Naive thymus-derived CD4-positive, alpha-beta T cell (primary cell): ENCODE measurements at regions of chr20 and their contacts with region 1.

Region 1: DNA sequence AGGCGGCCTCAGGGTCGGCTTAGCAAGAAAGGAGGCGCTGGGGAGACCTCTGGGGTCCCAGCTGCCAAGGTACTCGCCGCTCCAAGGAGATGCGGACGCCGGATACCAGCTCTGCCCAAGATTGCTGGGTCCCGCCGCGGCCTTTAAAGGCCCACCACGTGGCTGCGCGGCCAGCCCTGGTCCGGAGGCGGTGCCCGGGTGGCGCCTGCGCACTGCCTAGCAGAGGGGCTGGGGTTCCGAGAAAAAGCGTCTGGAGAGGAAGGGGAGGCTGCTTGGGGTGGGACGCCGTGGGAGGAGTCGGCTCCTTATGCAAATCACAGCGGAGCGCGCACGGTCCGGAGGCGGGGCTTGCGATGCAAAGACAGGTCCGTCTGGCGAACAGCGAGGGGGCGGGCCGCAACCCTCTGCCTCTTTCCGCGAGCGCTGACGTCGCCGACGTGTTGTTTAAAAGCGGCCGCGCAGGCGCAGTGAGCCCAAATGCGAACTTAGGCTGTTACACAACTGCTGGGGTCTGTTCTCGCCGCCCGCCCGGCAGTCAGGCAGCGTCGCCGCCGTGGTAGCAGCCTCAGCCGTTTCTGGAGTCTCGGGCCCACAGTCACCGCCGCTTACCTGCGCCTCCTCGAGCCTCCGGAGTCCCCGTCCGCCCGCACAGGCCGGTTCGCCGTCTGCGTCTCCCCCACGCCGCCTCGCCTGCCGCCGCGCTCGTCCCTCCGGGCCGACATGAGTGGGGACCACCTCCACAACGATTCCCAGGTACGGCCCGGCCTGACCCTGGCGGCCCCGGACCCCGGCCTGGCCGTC is at the start of gene TOP1:
- DNase-seq: peak; percentile 98 to 100 (median 99)
- ATAC-seq: peak; percentile 99
- H3K4me3 ChIP-seq: peak within 1 kb of the TSS; percentile 58
- H3K4me3 Mint-ChIP-seq: peak within 1 kb of the TSS; percentile 79 to 96 (median 94)
- H3K27ac ChIP-seq: peak within 1 kb of the TSS; percentile 99
- H3K27ac Mint-ChIP-seq: peak within 1 kb of the TSS; percentile 88 to 97 (median 96)
- H3K4me1 ChIP-seq: peaks cover 32 to 38% of the 10 kb centered on the region in 2 donors
- H3K4me1 Mint-ChIP-seq: peaks cover 41 to 52% (median 48%) of the 10 kb centered on the region in 7 donors
- H3K27me3 ChIP-seq: no peaks in the 10 kb centered on the region
- H3K27me3 Mint-ChIP-seq: no peaks in the 10 kb centered on the region
- total RNA-seq, gene TOP1: 32.0 to 82.8 (median 43.4) TPM

Region 2: GRCh38 chr20:40970201-40970600 is 58.3 kb before region 1 on chr20:
- CTCF ChIA-PET with region 1: no interaction called
- POLR2A ChIA-PET with region 1: no interaction called
- intact Hi-C with region 1: loop called in 1 of 2 experiments (anchors 1 kb)
- DNase-seq: no peak
- ATAC-seq: no peak
- H3K4me3 ChIP-seq: no peak overlapping the region
- H3K4me3 Mint-ChIP-seq: no peak overlapping the region
- H3K27ac ChIP-seq: no peak overlapping the region
- H3K27ac Mint-ChIP-seq: no peak overlapping the region
- H3K4me1 ChIP-seq: no peaks in the 10 kb centered on the region
- H3K4me1 Mint-ChIP-seq: peaks cover 5 to 12% (median 9%) of the 10 kb centered on the region in 7 donors
- H3K27me3 ChIP-seq: no peaks in the 10 kb centered on the region
- H3K27me3 Mint-ChIP-seq: peaks cover 0 to 49% (median 8%) of the 10 kb centered on the region in 5 donors

Region 3: DNA sequence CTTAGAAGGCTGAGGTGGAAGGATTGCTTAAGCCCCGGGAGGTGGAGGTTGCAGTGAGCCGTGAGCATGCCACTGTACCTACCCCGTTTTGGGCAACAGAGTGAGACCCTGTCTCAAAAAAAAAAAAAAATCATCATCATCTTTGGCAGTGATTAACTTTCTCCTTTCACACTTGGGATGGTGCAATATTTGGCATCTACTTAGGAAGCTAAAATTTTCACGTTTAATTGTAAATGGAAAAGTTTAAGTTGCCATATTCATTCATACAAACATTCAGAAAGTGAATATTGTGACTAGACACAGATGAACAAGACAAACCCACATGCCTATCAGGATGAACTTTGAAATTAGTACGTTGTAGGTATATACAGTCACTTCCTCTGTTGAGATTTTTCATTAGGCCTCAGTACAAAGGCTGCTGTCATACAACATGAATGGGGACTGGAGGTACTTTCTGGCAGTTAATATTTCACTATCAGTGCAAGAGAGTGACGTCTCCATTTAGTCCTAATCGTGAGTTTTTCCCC is 10.4 kb after region 1 on chr20:
- CTCF ChIA-PET with region 1: interaction called, 3 read pairs
- POLR2A ChIA-PET with region 1: interaction called, 6 read pairs
- intact Hi-C with region 1: loop called (anchors 1 kb)
- DNase-seq: no peak
- ATAC-seq: peak; percentile 34
- H3K4me3 ChIP-seq: no peak overlapping the region
- H3K4me3 Mint-ChIP-seq: peak overlapping the region in 6 of 10 donors; percentile 11 to 42 (median 28)
- H3K27ac ChIP-seq: no peak overlapping the region
- H3K27ac Mint-ChIP-seq: peak overlapping the region in 5 of 9 donors; percentile 45 to 63 (median 48)
- H3K4me1 ChIP-seq: peaks cover 35 to 42% of the 10 kb centered on the region in 2 donors
- H3K4me1 Mint-ChIP-seq: peaks cover 61 to 99% (median 93%) of the 10 kb centered on the region in 7 donors
- H3K27me3 ChIP-seq: no peaks in the 10 kb centered on the region
- H3K27me3 Mint-ChIP-seq: no peaks in the 10 kb centered on the region

Region 4: DNA sequence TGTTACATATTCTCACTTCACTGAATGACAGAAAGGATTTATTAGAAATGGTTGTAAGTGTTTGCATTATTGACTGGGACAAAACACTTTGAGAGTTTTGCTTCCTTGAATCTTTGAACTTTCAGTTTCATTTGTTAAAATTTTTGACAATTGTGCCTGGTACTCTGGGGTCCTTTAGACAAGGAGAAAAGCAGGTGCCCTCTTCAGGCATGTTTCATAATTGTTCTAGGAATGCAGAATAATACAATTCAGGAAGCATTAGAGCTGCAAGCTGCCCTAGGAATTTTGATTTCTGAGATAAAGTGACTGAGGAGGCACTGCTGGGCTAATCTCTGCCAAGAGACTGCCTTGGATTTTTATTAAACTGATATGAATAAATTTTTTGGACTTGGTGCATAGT is 49.8 kb after region 1 on chr20:
- CTCF ChIA-PET with region 1: no interaction called
- POLR2A ChIA-PET with region 1: interaction called, 3 read pairs
- intact Hi-C with region 1: loop called (anchors 2 kb)
- DNase-seq: peak in 1 of 9 donors; percentile 16
- ATAC-seq: peak; percentile 45
- H3K4me3 ChIP-seq: no peak overlapping the region
- H3K4me3 Mint-ChIP-seq: peak overlapping the region in 6 of 10 donors; percentile 24 to 56 (median 49)
- H3K27ac ChIP-seq: no peak overlapping the region
- H3K27ac Mint-ChIP-seq: peak overlapping the region; percentile 24 to 76 (median 63)
- H3K4me1 ChIP-seq: peaks cover 4 to 40% of the 10 kb centered on the region in 2 donors
- H3K4me1 Mint-ChIP-seq: peaks cover 37 to 71% (median 66%) of the 10 kb centered on the region in 7 donors
- H3K27me3 ChIP-seq: no peaks in the 10 kb centered on the region
- H3K27me3 Mint-ChIP-seq: no peaks in the 10 kb centered on the region

Region 5: DNA sequence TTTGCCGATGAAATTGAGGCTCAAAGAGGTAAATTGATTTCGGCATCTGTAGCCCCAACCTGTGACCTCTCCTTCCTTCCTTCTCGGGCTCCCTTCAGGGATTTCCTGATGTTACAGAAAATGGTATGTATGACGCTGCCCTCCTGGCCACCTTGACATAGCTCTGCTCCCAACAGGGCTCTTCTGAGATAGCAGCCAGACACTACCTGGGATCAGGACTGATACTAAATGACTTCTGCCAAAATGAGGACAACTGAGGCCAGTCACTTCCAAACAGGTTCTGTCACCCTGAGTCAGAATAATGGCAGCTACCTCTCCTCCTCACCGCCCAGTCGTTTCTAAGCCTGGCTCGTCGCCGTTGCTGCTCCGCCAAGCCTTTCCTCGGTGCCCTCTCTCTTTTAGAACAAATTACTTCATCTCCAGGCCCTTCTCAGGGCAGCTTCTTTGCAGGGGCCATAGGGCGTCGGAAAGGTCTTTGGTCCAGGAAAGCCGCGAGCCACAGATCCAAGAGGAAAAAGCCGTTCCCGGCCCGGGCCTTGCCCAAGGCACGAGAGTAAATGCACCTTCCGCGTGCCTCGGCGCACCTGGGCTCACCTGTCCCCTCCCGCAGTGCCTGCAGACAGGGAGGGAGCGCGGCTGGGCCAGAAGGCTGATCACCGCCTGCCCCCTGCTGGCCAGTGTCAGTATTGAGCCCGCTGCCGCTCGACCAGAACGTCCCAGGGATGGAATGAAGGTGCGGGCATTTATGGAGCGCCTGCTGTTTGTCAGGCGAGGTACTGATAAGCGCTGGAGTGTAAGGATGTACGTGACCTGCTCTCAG is 311.2 kb after region 1 on chr20:
- CTCF ChIA-PET with region 1: no interaction called
- POLR2A ChIA-PET with region 1: no interaction called
- intact Hi-C with region 1: loop called in 1 of 2 experiments (anchors 1 kb)
- DNase-seq: peak; percentile 72 to 92 (median 83)
- ATAC-seq: peak; percentile 97
- H3K4me3 ChIP-seq: peak overlapping the region; percentile 28
- H3K4me3 Mint-ChIP-seq: peak overlapping the region; percentile 72 to 85 (median 82)
- H3K27ac ChIP-seq: no peak overlapping the region
- H3K27ac Mint-ChIP-seq: peak overlapping the region in 5 of 9 donors; percentile 47 to 86 (median 67)
- H3K4me1 ChIP-seq: peaks cover 0 to 3% of the 10 kb centered on the region in 2 donors
- H3K4me1 Mint-ChIP-seq: peaks cover 8 to 15% (median 9%) of the 10 kb centered on the region in 7 donors
- H3K27me3 ChIP-seq: no peaks in the 10 kb centered on the region
- H3K27me3 Mint-ChIP-seq: peaks cover 0 to 12% (median 3%) of the 10 kb centered on the region in 5 donors